Endothelial cell of umbilical vein (primary cell): ENCODE measurements at regions of chr3 and their contacts with region 1.

Region 1: DNA sequence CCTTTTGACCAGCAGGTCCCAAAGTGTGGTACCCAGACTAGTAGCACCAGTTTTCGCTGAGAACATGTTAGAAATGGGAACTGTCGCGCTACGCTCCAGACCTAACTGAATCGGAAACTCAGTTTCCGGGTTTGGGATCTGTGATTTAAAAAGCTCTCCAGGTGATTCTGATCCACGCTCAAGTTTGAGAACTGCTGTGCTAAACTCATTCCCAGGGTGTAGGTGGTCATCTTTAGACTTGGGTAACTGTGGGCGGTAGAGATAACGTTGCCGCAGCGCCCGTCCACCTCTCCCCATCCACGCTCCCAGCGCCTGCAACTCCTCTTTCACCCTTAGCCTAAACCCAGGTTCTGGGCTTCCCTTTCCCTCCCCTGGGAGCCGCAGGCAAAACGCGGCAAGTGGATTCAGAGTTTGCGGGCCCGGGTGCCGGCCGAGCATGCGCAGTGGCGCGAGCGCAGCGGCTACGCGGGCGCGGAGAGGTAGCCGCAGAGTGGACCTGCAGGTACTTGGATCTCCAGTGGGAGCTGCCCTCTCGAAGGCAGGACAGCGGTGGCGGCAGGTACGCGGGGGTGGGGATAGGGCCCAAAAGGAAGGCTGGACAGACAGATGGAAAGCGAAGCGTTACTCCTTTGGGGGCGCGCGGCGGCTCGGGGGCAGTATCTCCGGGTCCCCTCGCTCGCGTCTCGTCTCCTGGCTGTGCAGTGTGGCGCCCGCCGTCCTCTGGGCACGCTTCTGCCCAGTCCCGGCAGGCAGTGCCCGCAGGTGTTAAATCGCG is at the start of gene PLS1:
- DNase-seq: peak; percentile 88
- H3K4me3 ChIP-seq: peak within 1 kb of the TSS; percentile 11 to 72 (median 69)
- H3K27ac ChIP-seq: peak within 1 kb of the TSS; percentile 2
- H3K4me1 ChIP-seq: peaks cover 11% of the 10 kb centered on the region
- H3K27me3 ChIP-seq: no peaks in the 10 kb centered on the region
- CTCF ChIP-seq: no peak
- POLR2A ChIP-seq: peak; percentile 52
- total RNA-seq, gene PLS1: 1.3 and 2.9 TPM in 2 replicates

Region 2: DNA sequence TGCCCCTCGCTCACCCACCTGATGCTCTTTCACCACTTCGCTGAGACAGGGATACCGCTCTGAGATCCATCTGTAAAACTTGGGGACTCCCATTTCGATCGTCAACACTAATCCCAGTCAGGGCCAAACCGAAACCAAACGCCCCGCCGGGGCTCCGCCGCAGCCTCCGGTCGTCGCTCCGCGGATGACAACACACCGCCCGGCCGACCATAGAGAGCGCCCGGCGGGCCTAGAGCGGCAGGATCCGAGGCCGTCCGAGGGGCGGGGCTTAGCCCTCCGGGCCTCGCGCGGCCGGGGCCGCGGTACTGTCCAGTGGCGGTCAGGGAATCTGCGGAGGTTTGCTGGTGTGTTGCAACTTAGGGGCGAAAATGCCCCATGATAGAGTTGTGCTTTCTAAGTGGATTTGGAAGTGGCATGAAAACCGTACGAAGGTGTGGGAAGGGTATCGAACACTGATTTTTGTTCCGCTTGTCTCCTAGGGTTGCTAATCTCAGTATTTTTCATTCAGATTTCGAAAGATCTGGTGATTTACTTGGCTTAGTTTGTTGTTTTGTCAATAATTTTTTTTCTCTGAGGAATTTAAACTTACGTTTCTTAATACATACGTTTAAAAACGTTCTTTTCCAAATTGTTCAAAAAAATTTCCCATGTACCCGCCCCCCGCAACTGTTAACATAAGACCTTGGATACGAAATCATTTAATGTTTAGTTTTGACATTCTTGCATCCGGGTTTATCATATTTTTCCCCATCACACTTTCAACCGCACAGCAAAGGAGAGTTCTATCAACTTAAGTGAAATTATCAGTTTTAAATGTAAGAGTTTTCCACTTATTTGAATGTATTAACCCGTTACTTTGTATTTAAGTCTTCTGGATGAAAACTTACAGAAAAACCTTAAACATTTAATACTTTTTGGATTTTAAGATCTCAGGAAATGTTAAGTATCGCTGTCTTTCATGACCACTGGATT is 148.0 kb before region 1 on chr3 and contains the start of gene XRN1:
- CTCF ChIA-PET with region 1: no interaction called
- POLR2A ChIA-PET with region 1: no interaction called
- dilution Hi-C with region 1: no loop called
- intact Hi-C with region 1: loop called (anchors 5 kb)
- DNase-seq: peak; percentile 93
- H3K4me3 ChIP-seq: peak within 1 kb of the TSS; percentile 44 to 98 (median 83)
- H3K27ac ChIP-seq: peak within 1 kb of the TSS; percentile 84
- H3K4me1 ChIP-seq: peaks cover 20% of the 10 kb centered on the region
- H3K27me3 ChIP-seq: no peaks in the 10 kb centered on the region
- CTCF ChIP-seq: no peak
- POLR2A ChIP-seq: peak; percentile 95
- total RNA-seq, gene XRN1: 34.4 and 40.0 TPM in 2 replicates

Region 3: DNA sequence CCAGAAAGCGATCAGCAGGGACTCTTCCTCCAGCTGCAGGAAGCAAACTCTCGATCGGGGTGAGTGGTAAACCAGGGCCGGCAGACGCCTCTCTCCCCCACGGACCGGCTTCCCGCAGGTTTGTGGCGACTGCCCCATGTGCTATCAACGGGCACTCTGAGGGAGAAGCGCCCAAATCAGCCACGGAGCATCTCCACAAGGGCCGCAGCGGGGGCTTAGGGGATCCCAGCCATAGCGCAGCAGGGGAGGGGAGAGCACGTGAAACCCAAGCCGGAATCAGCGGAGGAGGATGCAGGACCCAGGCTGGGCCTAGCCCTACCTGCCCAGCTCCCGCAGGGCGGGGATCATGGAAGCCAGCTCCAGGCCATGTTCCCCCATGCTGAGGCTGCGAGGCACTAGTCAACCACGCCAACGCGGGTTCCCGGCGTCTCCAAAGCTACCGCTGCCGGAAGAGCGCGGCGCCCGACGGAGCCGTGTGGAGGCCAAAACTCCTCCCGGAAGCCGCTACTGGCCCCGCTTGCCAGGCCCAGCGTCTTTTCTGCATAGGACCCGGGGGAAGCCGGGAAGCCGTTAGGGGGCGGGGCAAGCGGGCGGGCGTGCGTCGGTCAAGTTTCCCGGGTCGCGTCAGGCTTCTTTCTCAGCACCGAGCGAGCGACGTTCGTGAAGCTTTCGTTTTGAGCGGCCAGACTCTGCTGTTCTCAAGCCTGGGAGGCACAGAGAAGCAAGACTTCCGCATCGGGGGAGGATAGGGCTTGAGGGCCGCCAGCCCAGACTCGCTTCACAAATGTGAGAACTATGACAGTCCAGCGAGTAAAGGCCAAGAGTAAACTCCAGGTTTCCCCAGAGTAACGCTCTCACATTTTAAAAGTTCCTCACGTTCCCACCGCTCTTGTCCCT is 17.6 kb before region 1 on chr3 and contains the start of gene ATR:
- CTCF ChIA-PET with region 1: no interaction called
- POLR2A ChIA-PET with region 1: no interaction called
- dilution Hi-C with region 1: no loop called
- intact Hi-C with region 1: loop called (anchors 1 kb)
- DNase-seq: peak; percentile 96
- H3K4me3 ChIP-seq: peak within 1 kb of the TSS; percentile 69 to 82 (median 81)
- H3K27ac ChIP-seq: peak within 1 kb of the TSS; percentile 81
- H3K4me1 ChIP-seq: peaks cover 15% of the 10 kb centered on the region
- H3K27me3 ChIP-seq: peaks cover 12 to 14% of the 10 kb centered on the region in 2 experiments
- CTCF ChIP-seq: no peak
- POLR2A ChIP-seq: peak; percentile 89
- total RNA-seq, gene ATR: 21.1 and 23.6 TPM in 2 replicates

Region 4: DNA sequence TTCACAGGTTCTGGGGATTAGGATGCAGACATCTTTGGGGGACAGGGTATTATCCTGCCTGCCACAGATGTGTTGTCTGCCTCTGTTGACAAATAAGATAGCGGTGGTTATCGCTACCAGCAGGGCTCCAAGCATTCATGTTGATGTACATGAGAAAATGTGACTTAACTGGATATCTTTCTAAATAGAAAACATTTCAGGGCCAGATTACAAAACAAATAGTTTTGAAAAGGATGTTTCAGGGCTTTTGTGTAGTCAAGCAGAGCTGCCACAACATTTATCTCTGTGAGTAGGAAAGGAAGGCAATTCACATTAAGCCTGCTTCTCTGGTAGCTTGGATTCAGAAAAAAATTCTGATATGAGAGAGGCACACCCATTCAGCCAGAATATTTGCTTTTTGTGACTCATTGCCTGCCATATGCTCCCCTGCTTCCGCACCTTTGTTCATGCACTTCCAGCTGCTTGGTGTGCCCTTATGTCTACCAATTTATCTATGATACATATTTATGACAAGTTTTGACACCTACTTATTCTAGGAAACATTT is 22.9 kb after region 1 on chr3:
- CTCF ChIA-PET with region 1: no interaction called
- POLR2A ChIA-PET with region 1: no interaction called
- dilution Hi-C with region 1: no loop called
- intact Hi-C with region 1: loop called (anchors 2 kb)
- DNase-seq: peak; percentile 66
- H3K4me3 ChIP-seq: no peak overlapping the region
- H3K27ac ChIP-seq: no peak overlapping the region
- H3K4me1 ChIP-seq: peaks cover 13% of the 10 kb centered on the region
- H3K27me3 ChIP-seq: no peaks in the 10 kb centered on the region
- CTCF ChIP-seq: no peak
- POLR2A ChIP-seq: no peak

Region 5: DNA sequence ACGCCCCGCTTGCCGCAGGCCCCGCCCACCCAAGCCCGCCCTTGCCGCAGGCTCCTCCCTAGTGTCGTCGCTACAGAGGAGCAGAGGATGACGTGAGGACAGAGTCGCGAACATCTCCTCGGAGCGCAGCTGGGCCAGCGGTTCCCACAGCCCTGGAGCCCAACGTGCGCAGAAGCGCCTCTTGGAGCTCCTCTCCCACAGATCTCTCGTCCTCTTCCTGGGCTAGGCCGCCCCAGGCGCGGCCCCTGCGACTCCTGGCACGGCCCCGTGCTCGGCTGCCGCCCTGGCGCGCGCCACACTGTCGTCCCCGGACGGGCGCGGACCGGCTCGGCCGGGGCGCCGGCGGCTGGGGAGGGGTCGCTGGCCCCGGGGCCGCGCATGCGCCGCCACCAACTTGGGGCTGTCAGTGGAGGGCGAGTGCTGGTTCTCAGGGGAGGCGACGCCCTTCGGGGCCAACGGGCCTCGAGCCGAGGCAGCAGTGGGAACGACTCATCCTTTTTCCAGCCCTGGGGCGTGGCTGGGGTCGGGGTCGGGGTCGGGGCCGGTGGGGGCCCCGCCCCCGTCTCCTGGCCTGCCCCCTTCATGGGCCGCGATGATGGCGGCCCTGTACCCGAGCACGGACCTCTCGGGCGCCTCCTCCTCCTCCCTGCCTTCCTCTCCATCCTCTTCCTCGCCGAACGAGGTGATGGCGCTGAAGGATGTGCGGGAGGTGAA is 128.0 kb after region 1 on chr3 and contains the start of gene TRPC1:
- CTCF ChIA-PET with region 1: no interaction called
- POLR2A ChIA-PET with region 1: no interaction called
- dilution Hi-C with region 1: no loop called
- intact Hi-C with region 1: loop called (anchors 2 kb)
- DNase-seq: peak; percentile 80
- H3K4me3 ChIP-seq: peak within 1 kb of the TSS; percentile 25 to 79 (median 68)
- H3K27ac ChIP-seq: peak within 1 kb of the TSS; percentile 72
- H3K4me1 ChIP-seq: peaks cover 7% of the 10 kb centered on the region
- H3K27me3 ChIP-seq: no peaks in the 10 kb centered on the region
- CTCF ChIP-seq: no peak
- POLR2A ChIP-seq: peak; percentile 69
- total RNA-seq, gene TRPC1: 5.6 and 5.9 TPM in 2 replicates

Region 6: DNA sequence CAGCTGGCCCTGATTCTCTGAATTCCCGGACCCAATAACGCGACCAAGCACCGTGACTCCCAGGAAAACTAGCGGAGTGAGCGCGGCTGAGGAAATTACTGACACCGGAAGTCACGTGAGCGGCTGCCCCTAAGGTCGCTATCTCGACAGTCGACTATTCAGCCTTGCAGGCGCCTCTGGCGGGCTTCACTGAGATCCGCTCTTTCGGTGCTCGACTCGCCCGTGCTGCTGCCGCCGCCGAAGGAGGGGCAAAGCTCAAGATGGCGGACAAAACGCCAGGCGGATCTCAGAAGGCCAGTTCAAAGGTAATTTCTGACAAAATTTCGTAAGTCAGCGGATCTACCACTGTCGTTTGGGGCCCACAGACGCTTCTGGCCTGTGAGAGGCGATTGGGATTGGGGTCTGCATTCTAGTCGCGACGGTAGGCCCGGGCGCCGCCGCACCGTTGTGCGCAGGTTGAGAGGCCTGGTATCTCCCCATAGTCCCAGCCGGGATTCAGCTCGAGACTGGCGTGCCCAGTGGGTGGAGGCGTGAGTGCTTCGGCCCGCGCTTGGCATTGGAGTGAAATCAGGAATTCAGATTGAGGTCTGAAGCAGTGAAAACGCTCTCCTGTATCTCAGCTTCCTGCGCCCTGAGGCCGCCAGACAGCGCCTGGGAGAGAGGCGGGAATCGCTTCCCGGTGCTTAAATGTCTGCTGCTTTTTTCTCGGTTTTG is 405.4 kb after region 1 on chr3 and contains the start of gene U2SURP:
- CTCF ChIA-PET with region 1: no interaction called
- POLR2A ChIA-PET with region 1: no interaction called
- dilution Hi-C with region 1: no loop called
- intact Hi-C with region 1: loop called (anchors 1 kb)
- DNase-seq: peak; percentile 98
- H3K4me3 ChIP-seq: peak within 1 kb of the TSS; percentile 73 to 93 (median 92)
- H3K27ac ChIP-seq: peak within 1 kb of the TSS; percentile 72
- H3K4me1 ChIP-seq: peaks cover 16% of the 10 kb centered on the region
- H3K27me3 ChIP-seq: peaks cover 0 to 2% of the 10 kb centered on the region in 2 experiments
- CTCF ChIP-seq: no peak
- POLR2A ChIP-seq: peak; percentile 84
- total RNA-seq, gene U2SURP: 85.2 and 92.4 TPM in 2 replicates